MCF 10A (cell line): ENCODE measurements at regions of chr1 and their contacts with region 1.

Region 1: DNA sequence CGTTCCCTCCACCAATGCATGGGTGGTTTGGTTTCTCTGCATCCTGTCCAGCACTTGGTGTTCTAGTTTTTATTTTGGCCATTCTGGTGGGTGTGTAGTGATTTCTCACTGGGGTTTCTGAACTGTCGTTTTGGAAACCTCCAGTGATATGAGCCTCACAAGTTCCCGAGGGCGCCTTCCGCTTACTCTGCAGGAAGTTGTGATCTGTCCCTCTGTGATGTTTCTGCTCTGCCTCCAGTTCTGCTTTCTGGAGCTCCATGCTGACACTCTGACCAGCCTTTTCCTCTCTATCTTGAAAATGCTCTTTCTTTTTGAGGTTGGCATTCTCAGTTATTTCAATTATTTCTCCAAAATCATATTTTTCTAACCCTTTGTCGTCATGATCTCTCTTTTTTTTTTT is 111.6 kb downstream of the PLD5 start:
- DNase-seq: no peak
- H3K4me3 Mint-ChIP-seq: no peak overlapping the region
- H3K27ac Mint-ChIP-seq: no peak overlapping the region
- H3K4me1 Mint-ChIP-seq: peaks cover 6% of the 10 kb centered on the region
- H3K27me3 Mint-ChIP-seq: no peaks in the 10 kb centered on the region
- CTCF ChIP-seq: no peak

Region 2: GRCh38 chr1:242128951-242129502 is 283.9 kb before region 1 on chr1:
- CTCF ChIA-PET with region 1: no interaction called
- POLR2A ChIA-PET with region 1: no interaction called
- intact Hi-C with region 1: loop called (anchors 10 kb)
- DNase-seq: peak; percentile 62
- H3K4me3 Mint-ChIP-seq: no peak overlapping the region
- H3K27ac Mint-ChIP-seq: no peak overlapping the region
- H3K4me1 Mint-ChIP-seq: no peaks in the 10 kb centered on the region
- H3K27me3 Mint-ChIP-seq: no peaks in the 10 kb centered on the region
- CTCF ChIP-seq: peak; percentile 31

Region 3: DNA sequence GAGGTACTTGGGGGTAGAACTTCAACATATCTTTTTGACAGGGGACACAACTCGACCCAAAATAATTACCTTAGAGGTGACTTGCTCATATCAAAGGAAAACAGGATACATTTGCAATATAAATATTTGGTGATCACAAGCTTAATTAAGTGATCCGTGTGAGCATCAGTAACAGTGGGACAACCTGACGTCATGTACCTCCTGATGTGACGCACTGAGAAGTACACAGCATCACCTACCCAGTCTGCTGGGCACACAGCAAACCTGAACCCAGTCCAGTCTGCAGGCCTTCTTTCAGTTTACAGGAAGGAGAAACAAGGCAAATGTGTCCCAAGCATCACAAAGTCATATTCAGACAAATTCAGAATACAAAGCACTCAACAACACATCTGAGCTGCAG is 26.7 kb before region 1 on chr1:
- CTCF ChIA-PET with region 1: no interaction called
- POLR2A ChIA-PET with region 1: no interaction called
- intact Hi-C with region 1: no loop called
- DNase-seq: no peak
- H3K4me3 Mint-ChIP-seq: no peak overlapping the region
- H3K27ac Mint-ChIP-seq: no peak overlapping the region
- H3K4me1 Mint-ChIP-seq: no peaks in the 10 kb centered on the region
- H3K27me3 Mint-ChIP-seq: no peaks in the 10 kb centered on the region
- CTCF ChIP-seq: no peak

Region 4: GRCh38 chr1:242425232-242425631 is 12.3 kb after region 1 on chr1:
- CTCF ChIA-PET with region 1: interaction called, 7 read pairs
- POLR2A ChIA-PET with region 1: interaction called, 11 read pairs
- intact Hi-C with region 1: no loop called
- DNase-seq: peak; percentile 80
- H3K4me3 Mint-ChIP-seq: no peak overlapping the region
- H3K27ac Mint-ChIP-seq: no peak overlapping the region
- H3K4me1 Mint-ChIP-seq: peaks cover 17% of the 10 kb centered on the region
- H3K27me3 Mint-ChIP-seq: no peaks in the 10 kb centered on the region
- CTCF ChIP-seq: peak; percentile 40